Caco-2 (cell line): ENCODE measurements at regions of chr1 and their contacts with region 1.

Region 1: DNA sequence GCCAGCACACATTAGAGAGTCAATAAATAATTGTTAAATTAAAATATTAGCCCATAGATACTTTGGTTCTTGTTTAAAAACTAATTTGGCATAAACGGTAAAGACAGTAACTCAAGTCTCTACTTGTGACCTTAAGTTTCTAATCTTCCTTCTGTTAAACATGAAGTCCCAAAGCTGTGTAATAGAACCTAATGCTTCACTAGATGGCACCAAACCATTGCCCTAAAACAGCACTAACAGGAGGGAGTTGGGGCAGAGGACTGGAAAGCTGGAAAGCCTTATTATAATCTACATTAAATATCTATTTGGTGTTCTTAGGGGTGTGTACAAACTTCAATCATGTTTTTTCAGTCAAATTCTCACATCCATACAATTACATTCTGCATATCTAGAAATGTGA is 176.7 kb downstream of the OLFM3 start:
- DNase-seq: peak in 1 of 2 experiments; percentile 9
- H3K4me3 ChIP-seq: no peak overlapping the region
- H3K4me3 Mint-ChIP-seq: no peak overlapping the region
- H3K27ac Mint-ChIP-seq: no peak overlapping the region
- H3K4me1 ChIP-seq: no peaks in the 10 kb centered on the region
- H3K4me1 Mint-ChIP-seq: no peaks in the 10 kb centered on the region
- H3K27me3 ChIP-seq: no peaks in the 10 kb centered on the region
- H3K27me3 Mint-ChIP-seq: peaks cover 6% of the 10 kb centered on the region
- CTCF ChIP-seq: peak; percentile 18 to 41

Region 2: GRCh38 chr1:101915597-101915996 is 95.5 kb after region 1 on chr1:
- CTCF ChIA-PET with region 1: no interaction called
- POLR2A ChIA-PET with region 1: no interaction called
- intact Hi-C with region 1: no loop called
- DNase-seq: no peak
- H3K4me3 ChIP-seq: no peak overlapping the region
- H3K4me3 Mint-ChIP-seq: no peak overlapping the region
- H3K27ac Mint-ChIP-seq: no peak overlapping the region
- H3K4me1 ChIP-seq: no peaks in the 10 kb centered on the region
- H3K4me1 Mint-ChIP-seq: no peaks in the 10 kb centered on the region
- H3K27me3 ChIP-seq: no peaks in the 10 kb centered on the region
- H3K27me3 Mint-ChIP-seq: no peaks in the 10 kb centered on the region
- CTCF ChIP-seq: no peak

Region 3: GRCh38 chr1:101971304-101971703 is 151.2 kb after region 1 on chr1:
- CTCF ChIA-PET with region 1: no interaction called
- POLR2A ChIA-PET with region 1: no interaction called
- intact Hi-C with region 1: loop called (anchors 2 kb)
- DNase-seq: peak in 1 of 2 experiments; percentile 0
- H3K4me3 ChIP-seq: no peak overlapping the region
- H3K4me3 Mint-ChIP-seq: no peak overlapping the region
- H3K27ac Mint-ChIP-seq: no peak overlapping the region
- H3K4me1 ChIP-seq: no peaks in the 10 kb centered on the region
- H3K4me1 Mint-ChIP-seq: no peaks in the 10 kb centered on the region
- H3K27me3 ChIP-seq: no peaks in the 10 kb centered on the region
- H3K27me3 Mint-ChIP-seq: peaks cover 10% of the 10 kb centered on the region
- CTCF ChIP-seq: no peak

Region 4: GRCh38 chr1:102434421-102434820 is 614.4 kb after region 1 on chr1:
- CTCF ChIA-PET with region 1: interaction called, 3 read pairs
- POLR2A ChIA-PET with region 1: no interaction called
- intact Hi-C with region 1: loop called (anchors 1 kb)
- DNase-seq: peak; percentile 32 to 36
- H3K4me3 ChIP-seq: no peak overlapping the region
- H3K4me3 Mint-ChIP-seq: no peak overlapping the region
- H3K27ac Mint-ChIP-seq: no peak overlapping the region
- H3K4me1 ChIP-seq: no peaks in the 10 kb centered on the region
- H3K4me1 Mint-ChIP-seq: no peaks in the 10 kb centered on the region
- H3K27me3 ChIP-seq: no peaks in the 10 kb centered on the region
- H3K27me3 Mint-ChIP-seq: no peaks in the 10 kb centered on the region
- CTCF ChIP-seq: peak; percentile 33 to 43